ENCODE measurements at regions of chr11 and their contacts with region 1.

Region 1: DNA sequence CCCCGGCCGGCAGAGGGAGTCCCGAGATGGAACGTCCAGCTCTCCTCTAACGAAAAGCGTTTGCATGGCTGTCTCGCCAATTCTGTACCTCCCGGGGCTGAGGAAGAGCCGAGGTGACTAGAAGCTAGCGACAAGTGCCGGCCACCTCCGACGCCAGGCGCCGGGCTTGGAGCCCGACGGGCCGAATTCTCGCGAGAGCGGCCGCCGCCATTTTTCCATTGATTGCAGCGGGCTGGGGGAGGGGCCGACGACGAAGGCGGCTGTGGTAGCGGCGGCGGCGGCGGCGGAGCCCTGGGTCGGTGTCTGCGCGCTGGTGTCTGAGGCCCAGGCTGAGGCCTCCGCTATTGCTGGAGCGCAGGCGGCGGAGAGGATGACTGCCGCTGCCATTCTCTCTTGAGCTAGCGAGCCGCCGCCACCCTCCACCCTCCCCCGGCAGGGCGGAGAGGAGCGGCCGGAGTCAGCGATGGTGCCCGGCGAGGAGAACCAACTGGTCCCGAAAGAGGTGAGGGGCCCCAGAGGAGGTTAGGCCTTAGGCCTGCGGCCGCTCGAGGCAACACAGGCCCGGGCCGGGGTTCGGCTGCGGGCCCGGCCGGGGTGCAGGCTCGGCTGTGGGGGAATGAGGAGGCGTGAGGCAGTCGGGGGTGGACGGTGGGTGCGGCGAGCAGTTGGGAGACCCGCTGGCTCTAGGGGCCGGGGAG is at the start of gene USP47:
- DNase-seq: peak; percentile 70
- ATAC-seq: peak; percentile 79
- H3K4me3 ChIP-seq: peak within 1 kb of the TSS; percentile 98
- H3K27ac ChIP-seq: peak within 1 kb of the TSS; percentile 95
- H3K4me1 ChIP-seq: peaks cover 4% of the 10 kb centered on the region; the same call in 1 of the 2 replicates
- H3K27me3 ChIP-seq: no peaks in the 10 kb centered on the region
- CTCF ChIP-seq: peak; percentile 40; the same call in 1 of the 2 replicates
- POLR2A ChIP-seq: peak; percentile 80
- RAD21 ChIP-seq: 0 out of 2 replicates have a peak, but pooled peaks have one; percentile 14
- total RNA-seq, gene USP47: 110 and 117 TPM in 2 replicates

Region 2: DNA sequence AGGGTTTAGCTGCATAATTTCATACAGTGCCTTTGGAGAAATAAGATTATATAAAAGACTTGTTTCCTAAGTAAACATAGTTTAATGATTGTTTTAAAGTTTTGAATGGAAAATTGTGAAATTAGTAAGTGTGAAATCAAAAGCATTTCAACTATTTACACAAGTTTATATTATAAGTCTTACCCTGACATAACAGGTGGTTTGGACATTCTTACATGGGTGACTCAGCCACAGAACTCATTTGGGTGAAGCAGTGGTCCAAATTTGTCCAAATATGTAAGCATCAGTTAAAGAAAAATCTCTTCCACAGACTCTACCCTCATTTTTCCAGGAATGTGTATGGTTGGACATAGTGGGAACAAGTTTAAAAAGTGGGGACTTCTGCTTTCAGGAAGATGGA is 67.9 kb after region 1 on chr11:
- CTCF ChIA-PET with region 1: no interaction called
- POLR2A ChIA-PET with region 1: no interaction called
- dilution Hi-C with region 1: no loop called
- in situ Hi-C with region 1: no loop called
- intact Hi-C with region 1: loop called (anchors 5 kb)
- DNase-seq: peak; percentile 76
- ATAC-seq: peak; percentile 90
- H3K4me3 ChIP-seq: no peak overlapping the region
- H3K27ac ChIP-seq: peak overlapping the region; percentile 98
- H3K4me1 ChIP-seq: peaks cover 7% of the 10 kb centered on the region
- H3K27me3 ChIP-seq: no peaks in the 10 kb centered on the region
- CTCF ChIP-seq: no peak
- POLR2A ChIP-seq: no peak
- RAD21 ChIP-seq: no peak

Region 3: GRCh38 chr11:12008790-12009616 is 167.1 kb after region 1 on chr11:
- CTCF ChIA-PET with region 1: no interaction called
- POLR2A ChIA-PET with region 1: no interaction called
- dilution Hi-C with region 1: no loop called
- in situ Hi-C with region 1: no loop called
- intact Hi-C with region 1: no loop called
- DNase-seq: peak; percentile 46
- ATAC-seq: peak; percentile 89
- H3K4me3 ChIP-seq: peak overlapping the region; percentile 100
- H3K27ac ChIP-seq: peak overlapping the region; percentile 96
- H3K4me1 ChIP-seq: peaks cover 30% of the 10 kb centered on the region
- H3K27me3 ChIP-seq: no peaks in the 10 kb centered on the region
- CTCF ChIP-seq: no peak
- POLR2A ChIP-seq: no peak
- RAD21 ChIP-seq: no peak

Region 4: GRCh38 chr11:12291766-12292165 is 449.9 kb after region 1 on chr11:
- CTCF ChIA-PET with region 1: no interaction called
- POLR2A ChIA-PET with region 1: no interaction called
- dilution Hi-C with region 1: no loop called
- in situ Hi-C with region 1: no loop called
- intact Hi-C with region 1: no loop called
- DNase-seq: no peak
- ATAC-seq: no peak
- H3K4me3 ChIP-seq: no peak overlapping the region
- H3K27ac ChIP-seq: no peak overlapping the region
- H3K4me1 ChIP-seq: peaks cover 18% of the 10 kb centered on the region
- H3K27me3 ChIP-seq: no peaks in the 10 kb centered on the region
- CTCF ChIP-seq: no peak
- POLR2A ChIP-seq: no peak
- RAD21 ChIP-seq: no peak

Measured in IMR-90 (cell line).